ENCODE measurements at regions of chr5 and their contacts with region 1.

Region 1: GRCh38 chr5:108727651-108728565 is 19.8 kb upstream of the FER start:
- DNase-seq: peak; percentile 94
- H3K4me3 ChIP-seq: peak overlapping the region; percentile 69 to 89 (median 82)
- H3K27ac ChIP-seq: peak overlapping the region; percentile 87 to 96 (median 90)
- H3K4me1 ChIP-seq: peaks cover 12 to 22% (median 19%) of the 10 kb centered on the region in 4 donors
- H3K27me3 ChIP-seq: no peaks in the 10 kb centered on the region
- CTCF ChIP-seq: peak in 2 of 3 experiments; percentile 2 to 10
- EP300 ChIP-seq: no peak
- POLR2A ChIP-seq: no peak

Region 2: DNA sequence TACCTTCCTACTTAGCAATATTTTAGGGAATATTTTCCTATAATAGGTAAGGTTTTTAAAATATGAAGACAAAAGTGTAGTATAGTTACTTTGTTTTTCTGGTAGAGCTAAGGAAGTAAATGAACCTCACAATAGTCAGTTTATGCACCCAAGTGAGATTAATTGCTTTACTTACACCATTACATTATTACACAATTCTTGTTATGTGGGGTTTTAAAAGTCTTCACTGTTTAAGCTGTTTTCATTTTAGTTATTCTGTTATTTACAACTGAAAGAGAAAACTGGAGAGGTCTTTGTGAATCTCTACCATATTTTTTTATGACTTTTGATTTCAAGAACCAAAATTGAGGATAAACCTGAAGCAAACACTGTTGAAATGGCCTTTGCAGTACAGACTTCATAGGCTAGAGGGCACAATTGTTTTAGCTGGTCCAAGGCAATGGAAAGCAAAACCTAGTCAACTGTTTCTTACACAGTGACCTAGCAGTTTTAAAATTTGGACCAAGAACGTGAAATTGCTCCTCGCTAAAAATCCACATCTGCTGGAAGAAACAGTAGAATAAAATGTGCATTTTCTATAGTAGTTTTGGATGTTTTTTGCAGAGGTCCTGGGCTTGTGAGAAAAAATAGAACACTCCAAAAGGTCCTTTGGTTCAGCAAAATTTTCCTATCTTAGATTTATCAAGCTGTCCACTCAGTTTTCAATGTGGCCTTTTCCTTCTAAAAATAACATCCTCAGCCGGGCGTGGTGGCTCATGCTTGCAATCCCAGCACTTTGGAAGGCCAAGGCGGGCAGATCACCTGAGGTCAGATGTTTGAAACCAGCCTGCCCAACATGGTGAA is 46.6 kb before region 1 on chr5:
- intact Hi-C with region 1: loop called (anchors 5 kb)
- DNase-seq: no peak
- H3K4me3 ChIP-seq: peak overlapping the region in 2 of 4 donors; percentile 36 to 42
- H3K27ac ChIP-seq: peak overlapping the region; percentile 37 to 74 (median 65)
- H3K4me1 ChIP-seq: peaks cover 0 to 7% (median 4%) of the 10 kb centered on the region in 4 donors
- H3K27me3 ChIP-seq: no peaks in the 10 kb centered on the region
- CTCF ChIP-seq: peak; percentile 78 to 92 (median 87)
- EP300 ChIP-seq: no peak
- POLR2A ChIP-seq: no peak